Natural killer cell (primary cell): ENCODE measurements at regions of chr6 and their contacts with region 1.

Region 1: GRCh38 chr6:109073344-109074132 is 21.1 kb downstream of the SESN1 start:
- DNase-seq: peak in 1 of 2 donors; percentile 89
- ATAC-seq: peak; percentile 67 to 79 (median 73)
- H3K4me3 ChIP-seq: no peak overlapping the region
- H3K4me3 Mint-ChIP-seq: peak overlapping the region; percentile 54
- H3K27ac ChIP-seq: no peak overlapping the region
- H3K27ac Mint-ChIP-seq: peak overlapping the region; percentile 8 to 84
- H3K4me1 ChIP-seq: peaks cover 13% of the 10 kb centered on the region
- H3K4me1 Mint-ChIP-seq: peaks cover 30 to 38% of the 10 kb centered on the region in 2 donors
- H3K27me3 ChIP-seq: no peaks in the 10 kb centered on the region
- H3K27me3 Mint-ChIP-seq: no peaks in the 10 kb centered on the region
- CTCF ChIP-seq: peak; percentile 86

Region 2: DNA sequence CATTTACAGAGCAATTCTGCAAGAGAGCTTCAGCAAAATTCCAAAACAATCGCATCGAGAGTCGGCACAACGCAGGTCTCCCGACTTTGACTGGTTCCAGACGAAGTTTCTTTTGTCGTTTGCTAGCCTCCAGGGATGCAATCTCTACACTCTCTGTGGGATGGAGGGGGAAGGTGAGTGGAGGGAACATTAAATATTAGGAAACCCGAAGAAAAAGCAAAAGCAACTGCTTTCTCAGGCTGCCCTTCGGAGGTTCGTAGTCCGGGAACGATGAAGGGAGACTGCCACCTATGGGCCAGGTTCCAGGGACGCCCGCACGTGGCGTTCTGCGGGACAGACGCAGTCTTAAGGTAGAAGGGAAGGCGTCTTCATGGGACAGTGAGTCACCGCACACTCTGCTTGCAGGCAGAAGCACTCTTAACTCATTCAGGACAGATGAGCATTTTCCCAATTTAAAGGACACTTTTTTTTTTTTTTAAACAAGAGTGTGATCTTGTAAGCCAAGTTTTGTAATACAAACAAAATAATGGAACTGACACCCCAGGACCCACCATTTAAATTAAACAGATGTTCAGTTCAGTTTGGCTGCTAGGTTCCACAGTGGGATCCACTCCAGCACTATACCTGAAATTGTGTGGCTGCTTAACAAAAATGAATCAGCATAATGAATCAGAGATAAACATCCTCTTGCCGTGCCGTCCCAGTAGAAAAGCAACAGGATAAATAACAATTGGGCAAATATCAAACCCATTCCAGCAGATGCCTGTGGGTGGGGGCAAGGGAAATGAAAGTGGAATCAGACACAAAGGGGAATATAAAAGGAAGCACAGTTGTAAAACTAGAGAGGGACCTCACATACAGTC is 291.1 kb before region 1 on chr6:
- intact Hi-C with region 1: loop called (anchors 5 kb)
- DNase-seq: peak; percentile 59 to 87
- ATAC-seq: peak; percentile 93 to 99 (median 97)
- H3K4me3 ChIP-seq: peak overlapping the region; percentile 39
- H3K4me3 Mint-ChIP-seq: peak overlapping the region; percentile 86
- H3K27ac ChIP-seq: no peak overlapping the region
- H3K27ac Mint-ChIP-seq: peak overlapping the region in 1 of 2 donors; percentile 63
- H3K4me1 ChIP-seq: peaks cover 9% of the 10 kb centered on the region
- H3K4me1 Mint-ChIP-seq: peaks cover 12 to 17% of the 10 kb centered on the region in 2 donors
- H3K27me3 ChIP-seq: no peaks in the 10 kb centered on the region
- H3K27me3 Mint-ChIP-seq: peaks cover 8 to 10% of the 10 kb centered on the region in 2 donors
- CTCF ChIP-seq: peak; percentile 77

Region 3: DNA sequence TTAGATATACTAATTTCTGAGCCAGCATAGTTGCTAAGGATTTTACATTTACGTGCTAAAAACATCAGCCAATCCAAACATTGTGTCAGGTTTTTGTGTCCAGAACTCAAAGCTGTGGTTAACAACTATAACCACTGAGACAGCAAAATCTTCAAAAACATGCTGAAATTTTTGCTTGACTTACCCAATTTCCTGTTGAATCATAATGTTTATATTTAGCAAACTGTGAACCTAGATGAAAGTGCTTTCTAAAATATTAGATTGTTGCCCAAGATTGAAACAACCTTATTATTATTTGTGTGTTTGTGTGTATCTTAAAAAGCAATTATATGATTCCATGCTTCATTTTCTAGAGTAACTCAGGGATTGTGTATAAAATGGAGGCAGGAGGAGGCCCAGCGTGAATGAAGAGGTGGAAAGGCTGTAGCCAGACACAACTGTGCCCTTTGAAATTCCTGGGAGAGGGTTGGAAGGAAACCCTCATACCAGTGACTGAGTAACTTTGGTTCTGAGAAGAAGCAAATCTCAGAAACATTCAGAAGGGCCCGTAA is 177.4 kb before region 1 on chr6:
- intact Hi-C with region 1: loop called (anchors 1 kb)
- DNase-seq: peak in 1 of 2 donors; percentile 77
- ATAC-seq: peak; percentile 81 to 90 (median 86)
- H3K4me3 ChIP-seq: no peak overlapping the region
- H3K4me3 Mint-ChIP-seq: peak overlapping the region; percentile 94
- H3K27ac ChIP-seq: peak overlapping the region; percentile 91
- H3K27ac Mint-ChIP-seq: peak overlapping the region; percentile 91 to 95
- H3K4me1 ChIP-seq: peaks cover 39% of the 10 kb centered on the region
- H3K4me1 Mint-ChIP-seq: peaks cover 39 to 43% of the 10 kb centered on the region in 2 donors
- H3K27me3 ChIP-seq: no peaks in the 10 kb centered on the region
- H3K27me3 Mint-ChIP-seq: no peaks in the 10 kb centered on the region
- CTCF ChIP-seq: no peak

Region 4: DNA sequence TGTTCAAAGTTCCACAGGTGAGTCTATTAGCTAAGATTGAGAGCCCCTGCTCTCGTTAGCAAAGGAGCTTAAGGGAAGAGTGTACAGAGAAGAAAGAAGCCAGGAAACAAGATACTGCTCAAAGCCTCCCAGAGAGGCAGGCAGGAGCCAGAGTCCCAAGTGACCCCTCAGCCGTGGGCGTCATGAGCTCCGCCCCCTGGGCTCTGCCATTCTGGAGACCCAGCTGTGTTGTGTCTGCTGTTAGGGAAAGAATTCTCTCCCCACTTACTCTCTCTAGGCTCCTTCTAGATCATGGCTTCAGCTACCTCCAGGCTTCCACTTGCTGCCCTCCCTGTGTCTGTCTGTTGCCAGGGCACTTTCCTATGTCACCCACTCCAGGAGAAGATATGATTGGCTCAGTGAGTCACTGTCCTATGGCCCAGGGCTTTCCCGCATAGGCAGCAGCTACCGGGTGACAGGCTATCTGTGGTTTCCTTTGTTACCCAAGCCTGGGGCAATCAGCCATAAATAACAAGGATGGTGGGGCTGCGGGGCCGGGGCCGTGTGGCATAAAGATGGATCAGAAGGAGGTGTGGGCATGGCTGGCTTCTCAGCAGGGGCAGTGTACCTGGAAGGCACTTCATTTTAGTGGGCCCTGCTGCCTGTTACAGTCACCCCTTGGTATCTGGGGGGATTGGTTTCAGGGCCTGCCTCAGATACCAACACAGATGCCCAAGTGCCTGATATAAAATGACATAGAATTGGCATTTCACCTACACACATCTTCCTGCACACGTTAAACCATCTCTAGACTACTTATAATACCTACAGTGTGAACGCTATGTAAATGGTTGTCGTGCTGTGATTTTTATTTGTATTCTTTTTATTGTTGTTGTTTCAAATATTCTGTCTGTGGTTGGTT is 106.4 kb before region 1 on chr6:
- intact Hi-C with region 1: loop called (anchors 5 kb)
- DNase-seq: peak; percentile 52 to 53
- ATAC-seq: peak; percentile 89 to 95 (median 92)
- H3K4me3 ChIP-seq: no peak overlapping the region
- H3K4me3 Mint-ChIP-seq: peak overlapping the region; percentile 62
- H3K27ac ChIP-seq: peak overlapping the region; percentile 54
- H3K27ac Mint-ChIP-seq: peak overlapping the region; percentile 59 to 88
- H3K4me1 ChIP-seq: peaks cover 47% of the 10 kb centered on the region
- H3K4me1 Mint-ChIP-seq: peaks cover 40 to 46% of the 10 kb centered on the region in 2 donors
- H3K27me3 ChIP-seq: no peaks in the 10 kb centered on the region
- H3K27me3 Mint-ChIP-seq: no peaks in the 10 kb centered on the region
- CTCF ChIP-seq: no peak

Region 5: DNA sequence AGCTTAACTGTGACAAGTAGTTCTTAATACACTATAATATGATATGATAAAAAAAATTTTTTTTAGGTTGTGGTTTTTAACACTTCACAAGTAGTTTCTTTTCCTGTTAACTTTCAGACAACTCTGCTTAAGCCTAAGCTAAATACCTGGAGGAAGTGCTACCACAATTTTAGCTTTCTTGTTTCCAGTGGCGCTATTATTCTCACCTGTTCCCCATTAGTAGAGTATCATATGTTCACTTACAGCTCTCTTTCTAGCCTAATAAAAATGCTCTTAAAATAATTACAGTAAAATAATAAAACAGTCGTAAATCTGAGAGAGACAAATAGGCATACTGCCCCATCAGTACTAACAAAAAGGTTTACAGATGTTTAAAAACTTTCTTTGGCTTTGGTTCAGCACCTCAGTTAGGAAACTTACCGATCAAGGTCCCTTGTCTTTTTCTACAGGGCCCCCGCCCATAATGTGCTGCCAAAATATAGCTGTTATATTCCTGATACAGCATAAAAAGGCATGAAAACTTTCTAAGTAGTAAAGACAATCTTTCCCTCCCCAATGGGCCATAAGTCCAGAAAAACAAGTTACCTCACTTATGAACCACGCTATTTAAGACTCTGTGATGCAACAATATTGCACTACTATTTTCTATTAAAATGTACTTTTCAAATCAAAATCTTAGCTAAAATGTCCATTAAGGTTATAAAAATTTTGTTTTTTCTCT is 36.8 kb before region 1 on chr6:
- intact Hi-C with region 1: loop called (anchors 5 kb)
- DNase-seq: peak in 1 of 2 donors; percentile 51
- ATAC-seq: peak; percentile 82 to 94 (median 91)
- H3K4me3 ChIP-seq: no peak overlapping the region
- H3K4me3 Mint-ChIP-seq: peak overlapping the region; percentile 67
- H3K27ac ChIP-seq: peak overlapping the region; percentile 62
- H3K27ac Mint-ChIP-seq: peak overlapping the region; percentile 86 to 87
- H3K4me1 ChIP-seq: peaks cover 14% of the 10 kb centered on the region
- H3K4me1 Mint-ChIP-seq: peaks cover 37 to 41% of the 10 kb centered on the region in 2 donors
- H3K27me3 ChIP-seq: no peaks in the 10 kb centered on the region
- H3K27me3 Mint-ChIP-seq: no peaks in the 10 kb centered on the region
- CTCF ChIP-seq: no peak